ENCODE measurements at regions of chr16 and their contacts with region 1.

Region 1: DNA sequence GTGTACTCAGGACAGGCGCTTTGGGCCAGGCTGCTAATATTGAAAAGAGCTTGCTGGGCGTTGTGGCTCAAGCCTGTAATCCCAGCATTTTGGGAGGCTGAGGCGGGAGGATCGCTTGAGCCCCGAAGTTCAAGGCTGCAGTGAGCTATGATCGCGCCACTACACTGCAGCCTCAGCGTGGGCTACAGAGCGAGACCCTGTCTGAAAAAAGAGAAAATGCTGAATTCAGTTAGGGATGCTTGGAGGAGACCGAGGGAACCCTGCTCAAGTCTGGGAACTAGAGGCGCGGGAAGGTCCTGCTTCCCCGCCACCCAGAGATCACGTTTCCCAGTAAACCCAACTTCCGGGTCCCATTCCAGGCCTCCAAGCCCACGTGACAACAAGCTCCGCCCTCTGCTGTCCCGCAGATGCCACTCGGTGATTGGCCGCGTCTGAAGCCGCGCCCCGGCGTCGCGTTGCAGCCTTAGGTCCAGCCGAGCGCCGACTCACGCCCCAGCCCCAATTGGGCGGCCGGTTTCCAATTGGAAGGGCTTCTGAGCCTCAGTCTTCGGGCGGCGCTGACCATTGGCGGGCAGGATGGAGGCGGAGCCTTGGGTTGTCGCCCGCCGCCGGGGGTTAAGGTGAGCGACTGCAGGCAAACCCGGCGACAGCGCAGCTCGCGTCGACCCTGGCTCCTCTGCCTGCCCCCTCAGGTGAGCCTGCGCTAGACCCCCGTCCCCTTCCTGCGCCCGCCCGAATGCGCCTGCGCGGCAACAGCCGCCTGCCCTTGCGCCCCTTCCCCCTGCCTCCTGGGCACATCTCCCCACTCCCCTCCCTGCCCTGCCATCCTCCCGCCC is at the start of gene PHKG2:
- DNase-seq: peak; percentile 96 to 97
- H3K4me3 ChIP-seq: peak within 1 kb of the TSS; percentile 54 to 81 (median 65)
- H3K27ac ChIP-seq: peak within 1 kb of the TSS; percentile 78
- H3K4me1 ChIP-seq: peaks cover 0 to 4% (median 0%) of the 10 kb centered on the region in 4 experiments; a peak in 2 of 7 replicates
- H3K27me3 ChIP-seq: no peaks in the 10 kb centered on the region
- CTCF ChIP-seq: no peak
- EP300 ChIP-seq: 0 out of 3 replicates have a peak, but pooled peaks of 1 of the 2 experiments have one; percentile 15
- POLR2A ChIP-seq: peak; percentile 78 to 92
- RAD21 ChIP-seq: no peak
- total RNA-seq, gene PHKG2: 36.0 and 37.2 TPM in 2 replicates

Region 2: GRCh38 chr16:30731411-30731810 is 16.6 kb before region 1 on chr16:
- CTCF ChIA-PET with region 1: no interaction called
- POLR2A ChIA-PET with region 1: interaction called, 31 read pairs
- DNase-seq: no peak
- H3K4me3 ChIP-seq: no peak overlapping the region
- H3K27ac ChIP-seq: no peak overlapping the region
- H3K4me1 ChIP-seq: peaks cover 0 to 3% (median 3%) of the 10 kb centered on the region in 4 experiments; a peak in 2 of 7 replicates
- H3K27me3 ChIP-seq: no peaks in the 10 kb centered on the region
- CTCF ChIP-seq: no peak
- EP300 ChIP-seq: no peak
- POLR2A ChIP-seq: no peak
- RAD21 ChIP-seq: no peak

Region 3: GRCh38 chr16:30736996-30737793 is 10.8 kb before region 1 on chr16:
- CTCF ChIA-PET with region 1: no interaction called
- POLR2A ChIA-PET with region 1: interaction called, 31 read pairs
- DNase-seq: no peak
- H3K4me3 ChIP-seq: no peak overlapping the region
- H3K27ac ChIP-seq: no peak overlapping the region
- H3K4me1 ChIP-seq: peaks cover 0 to 7% (median 2%) of the 10 kb centered on the region in 4 experiments; a peak in 5 of 7 replicates
- H3K27me3 ChIP-seq: no peaks in the 10 kb centered on the region; a peak in 1 of 7 replicates
- CTCF ChIP-seq: no peak
- EP300 ChIP-seq: no peak
- POLR2A ChIP-seq: no peak
- RAD21 ChIP-seq: no peak

Region 4: DNA sequence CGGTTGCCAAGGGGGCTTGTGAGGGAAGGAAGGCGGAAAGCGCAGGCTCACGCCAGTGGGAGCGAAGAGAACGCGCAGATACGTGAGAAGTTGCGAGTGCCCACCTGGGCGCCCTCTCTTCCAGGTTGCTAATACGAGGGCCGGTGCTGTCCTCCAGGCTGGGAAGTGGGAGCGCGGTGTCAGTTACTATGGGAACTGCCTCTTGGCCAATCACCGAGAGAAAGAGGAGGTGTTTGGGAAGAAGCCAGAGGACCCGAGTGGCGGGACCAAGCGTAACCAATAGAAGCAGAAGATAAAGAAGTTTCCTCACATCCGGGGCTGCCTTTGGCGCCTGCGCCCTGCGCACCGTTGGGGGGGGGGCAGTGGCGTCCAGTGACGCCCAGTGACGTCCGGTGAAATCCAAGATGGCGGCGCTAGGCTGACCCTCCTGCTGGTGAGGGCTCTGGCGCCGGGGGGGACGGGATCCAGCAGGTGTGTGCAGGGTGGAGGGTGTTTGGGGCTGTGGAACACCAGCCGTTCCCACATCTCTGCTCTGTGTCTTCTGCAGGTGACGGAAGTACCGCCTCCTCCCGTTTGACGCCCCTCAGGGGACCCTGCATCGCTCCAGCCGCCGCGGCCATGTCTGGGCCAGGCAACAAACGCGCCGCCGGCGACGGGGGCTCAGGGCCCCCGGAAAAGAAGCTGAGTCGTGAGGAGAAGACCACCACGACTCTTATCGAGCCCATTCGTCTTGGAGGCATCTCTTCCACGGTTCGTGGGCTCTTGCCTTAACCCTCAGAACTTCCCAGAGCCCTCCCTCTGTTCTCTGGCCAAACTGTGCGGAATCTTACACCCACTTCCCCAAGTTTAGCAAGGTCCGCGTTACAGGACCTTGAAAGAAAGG is 14.2 kb after region 1 on chr16 and contains the starts of genes CFAP119 and RNF40:
- CTCF ChIA-PET with region 1: interaction called, 6 read pairs
- POLR2A ChIA-PET with region 1: interaction called, 92 read pairs
- DNase-seq: peak; percentile 86 to 98
- H3K4me3 ChIP-seq: peak within 1 kb of the TSS; percentile 80 to 97 (median 92)
- H3K27ac ChIP-seq: peak within 1 kb of the TSS; percentile 88
- H3K4me1 ChIP-seq: peaks cover 0 to 11% (median 2%) of the 10 kb centered on the region in 4 experiments; a peak in 4 of 7 replicates
- H3K27me3 ChIP-seq: no peaks in the 10 kb centered on the region; a peak in 1 of 7 replicates
- CTCF ChIP-seq: no peak
- EP300 ChIP-seq: no peak
- POLR2A ChIP-seq: peak; percentile 66 to 84
- RAD21 ChIP-seq: no peak
- total RNA-seq, gene CFAP119: 5.2 and 6.0 TPM in 2 replicates
- total RNA-seq, gene RNF40: 68.7 and 70.8 TPM in 2 replicates

Region 5: GRCh38 chr16:30797670-30798309 is 49.8 kb after region 1 on chr16:
- CTCF ChIA-PET with region 1: no interaction called
- POLR2A ChIA-PET with region 1: no interaction called
- DNase-seq: no peak
- H3K4me3 ChIP-seq: no peak overlapping the region
- H3K27ac ChIP-seq: no peak overlapping the region
- H3K4me1 ChIP-seq: no peaks in the 10 kb centered on the region
- H3K27me3 ChIP-seq: peaks cover 0 to 4% (median under 1%) of the 10 kb centered on the region in 4 experiments; a peak in 5 of 7 replicates
- CTCF ChIP-seq: peak in 2 of 3 experiments; percentile 26 to 54; a peak in 2 of 4 replicates
- EP300 ChIP-seq: no peak
- POLR2A ChIP-seq: no peak
- RAD21 ChIP-seq: peak in 1 of 2 experiments; percentile 29; a peak in 1 of 4 replicates

Region 6: GRCh38 chr16:30844671-30845449 is 96.8 kb after region 1 on chr16:
- CTCF ChIA-PET with region 1: no interaction called
- POLR2A ChIA-PET with region 1: no interaction called
- DNase-seq: peak; percentile 13 to 82
- H3K4me3 ChIP-seq: no peak overlapping the region
- H3K27ac ChIP-seq: no peak overlapping the region
- H3K4me1 ChIP-seq: no peaks in the 10 kb centered on the region
- H3K27me3 ChIP-seq: no peaks in the 10 kb centered on the region
- CTCF ChIP-seq: peak; percentile 3 to 90 (median 86)
- EP300 ChIP-seq: no peak
- POLR2A ChIP-seq: no peak
- RAD21 ChIP-seq: peak; percentile 90 to 94

Region 7: GRCh38 chr16:30957456-30958174 is 209.6 kb after region 1 on chr16 and contains the start of gene SETD1A:
- CTCF ChIA-PET with region 1: no interaction called
- POLR2A ChIA-PET with region 1: no interaction called
- DNase-seq: peak in 1 of 2 experiments; percentile 96
- H3K4me3 ChIP-seq: peak within 1 kb of the TSS; percentile 60 to 96 (median 90)
- H3K27ac ChIP-seq: peak within 1 kb of the TSS; percentile 100
- H3K4me1 ChIP-seq: peaks cover 0 to 9% (median 2%) of the 10 kb centered on the region in 4 experiments; a peak in 3 of 7 replicates
- H3K27me3 ChIP-seq: no peaks in the 10 kb centered on the region
- CTCF ChIP-seq: no peak
- EP300 ChIP-seq: peak in 1 of 2 experiments; percentile 98; a peak in 1 of 3 replicates
- POLR2A ChIP-seq: peak in 1 of 2 experiments; percentile 54; a peak in 1 of 3 replicates
- RAD21 ChIP-seq: no peak
- total RNA-seq, gene SETD1A: 29.0 and 29.6 TPM in 2 replicates